GM12878 (cell line): ENCODE measurements at regions of chrX and their contacts with region 1.

Region 1: GRCh38 chrX:13487731-13488523 is 81.5 kb upstream of the EGFL6 start:
- DNase-seq: peak; percentile 72
- ATAC-seq: peak; percentile 86
- H3K4me3 ChIP-seq: no peak overlapping the region
- H3K27ac ChIP-seq: peak overlapping the region; percentile 95
- H3K4me1 ChIP-seq: peaks cover 16% of the 10 kb centered on the region
- H3K27me3 ChIP-seq: no peaks in the 10 kb centered on the region
- CTCF ChIP-seq: peak; percentile 56 to 80 (median 62)
- EP300 ChIP-seq: no peak
- POLR2A ChIP-seq: no peak
- RAD21 ChIP-seq: peak; percentile 98

Region 2: GRCh38 chrX:12901486-12901885 is 586.4 kb before region 1 on chrX:
- CTCF ChIA-PET with region 1: interaction called, 18 read pairs
- POLR2A ChIA-PET with region 1: no interaction called
- RAD21 ChIA-PET with region 1: interaction called, 18 read pairs
- SMC1A ChIA-PET with region 1: interaction called, 9 read pairs
- in situ Hi-C with region 1: no loop called
- intact Hi-C with region 1: loop called (anchors 5 kb)
- DNase-seq: no peak
- ATAC-seq: peak; percentile 93
- H3K4me3 ChIP-seq: no peak overlapping the region
- H3K27ac ChIP-seq: no peak overlapping the region
- H3K4me1 ChIP-seq: no peaks in the 10 kb centered on the region
- H3K27me3 ChIP-seq: no peaks in the 10 kb centered on the region
- CTCF ChIP-seq: peak; percentile 68 to 84 (median 75)
- EP300 ChIP-seq: no peak
- POLR2A ChIP-seq: no peak
- RAD21 ChIP-seq: peak; percentile 80

Region 3: GRCh38 chrX:12984629-12985319 is 503.2 kb before region 1 on chrX:
- CTCF ChIA-PET with region 1: interaction called, 4 read pairs
- POLR2A ChIA-PET with region 1: no interaction called
- RAD21 ChIA-PET with region 1: interaction called, 18 read pairs
- SMC1A ChIA-PET with region 1: interaction called, 10 read pairs
- in situ Hi-C with region 1: no loop called
- intact Hi-C with region 1: loop called (anchors 2 kb)
- DNase-seq: no peak
- ATAC-seq: peak; percentile 74
- H3K4me3 ChIP-seq: peak overlapping the region; percentile 26; the same call in 1 of the 2 replicates
- H3K27ac ChIP-seq: peak overlapping the region; percentile 98
- H3K4me1 ChIP-seq: peaks cover 68% of the 10 kb centered on the region
- H3K27me3 ChIP-seq: no peaks in the 10 kb centered on the region
- CTCF ChIP-seq: no peak
- EP300 ChIP-seq: peak; percentile 68 to 87; a peak in 3 of 4 replicates
- POLR2A ChIP-seq: no peak
- RAD21 ChIP-seq: no peak; the same call in 1 of the 2 replicates

Region 4: GRCh38 chrX:13094828-13095341 is 393.0 kb before region 1 on chrX:
- CTCF ChIA-PET with region 1: interaction called, 101 read pairs
- POLR2A ChIA-PET with region 1: interaction called, 7 read pairs
- RAD21 ChIA-PET with region 1: interaction called, 145 read pairs
- SMC1A ChIA-PET with region 1: interaction called, 127 read pairs
- in situ Hi-C with region 1: no loop called
- intact Hi-C with region 1: loop called (anchors 1 kb)
- DNase-seq: no peak
- ATAC-seq: no peak
- H3K4me3 ChIP-seq: no peak overlapping the region
- H3K27ac ChIP-seq: no peak overlapping the region
- H3K4me1 ChIP-seq: peaks cover 44% of the 10 kb centered on the region
- H3K27me3 ChIP-seq: no peaks in the 10 kb centered on the region
- CTCF ChIP-seq: no peak
- EP300 ChIP-seq: no peak
- POLR2A ChIP-seq: no peak
- RAD21 ChIP-seq: no peak

Region 5: GRCh38 chrX:13263560-13264251 is 224.2 kb before region 1 on chrX:
- CTCF ChIA-PET with region 1: interaction called, 13 read pairs
- POLR2A ChIA-PET with region 1: interaction called, 6 read pairs
- RAD21 ChIA-PET with region 1: interaction called, 22 read pairs
- SMC1A ChIA-PET with region 1: interaction called, 15 read pairs
- in situ Hi-C with region 1: loop called (anchors 10 kb)
- intact Hi-C with region 1: loop called (anchors 1 kb)
- DNase-seq: peak; percentile 66
- ATAC-seq: peak; percentile 92
- H3K4me3 ChIP-seq: no peak overlapping the region; the same call in 1 of the 2 replicates
- H3K27ac ChIP-seq: peak overlapping the region; percentile 66
- H3K4me1 ChIP-seq: peaks cover 20% of the 10 kb centered on the region
- H3K27me3 ChIP-seq: no peaks in the 10 kb centered on the region
- CTCF ChIP-seq: no peak
- EP300 ChIP-seq: no peak; a peak in 1 of 4 replicates
- POLR2A ChIP-seq: no peak
- RAD21 ChIP-seq: no peak

Region 6: DNA sequence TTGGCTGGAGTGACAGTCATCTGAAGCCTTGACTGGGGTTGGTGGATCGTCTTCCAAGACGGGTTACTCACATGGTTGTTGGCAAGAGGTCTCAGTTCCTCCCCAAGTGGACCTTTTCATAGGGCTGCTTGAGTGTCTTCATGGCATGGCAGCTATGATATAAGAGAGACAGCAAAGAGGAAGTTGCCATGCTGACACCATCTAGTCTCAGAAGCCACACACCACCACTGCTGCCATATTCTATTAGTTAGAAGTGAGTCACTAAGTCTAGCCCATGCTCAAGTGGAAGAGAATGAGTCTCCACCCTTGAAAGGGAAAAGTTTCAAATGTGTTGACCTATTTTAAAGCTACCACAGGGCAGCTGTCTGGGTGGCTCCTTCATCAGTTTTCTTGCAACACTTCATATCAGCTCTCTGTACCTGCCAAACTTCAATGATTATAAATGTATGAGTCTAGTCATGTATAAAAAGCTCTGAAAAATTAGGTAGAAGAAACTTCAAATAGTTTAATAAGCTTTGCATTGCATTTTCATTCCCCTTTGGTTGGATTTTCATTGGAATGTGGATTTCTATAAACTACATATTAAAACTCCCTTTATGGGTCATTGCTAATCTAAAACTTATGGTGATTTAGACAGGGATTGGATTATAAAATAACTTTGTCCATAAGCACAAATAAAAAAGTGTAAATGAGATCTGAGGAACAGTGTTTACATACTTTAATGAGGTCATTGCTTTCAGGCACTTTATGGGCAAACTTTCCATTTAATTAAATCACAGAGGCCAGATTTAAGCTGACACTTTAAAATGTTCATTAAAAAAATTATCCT is 100.0 kb before region 1 on chrX:
- CTCF ChIA-PET with region 1: no interaction called
- POLR2A ChIA-PET with region 1: no interaction called
- RAD21 ChIA-PET with region 1: interaction called, 3 read pairs
- SMC1A ChIA-PET with region 1: interaction called, 3 read pairs
- in situ Hi-C with region 1: no loop called
- intact Hi-C with region 1: loop called (anchors 5 kb)
- DNase-seq: no peak
- ATAC-seq: peak; percentile 84
- H3K4me3 ChIP-seq: no peak overlapping the region
- H3K27ac ChIP-seq: no peak overlapping the region
- H3K4me1 ChIP-seq: no peaks in the 10 kb centered on the region
- H3K27me3 ChIP-seq: no peaks in the 10 kb centered on the region
- CTCF ChIP-seq: no peak
- EP300 ChIP-seq: no peak
- POLR2A ChIP-seq: no peak
- RAD21 ChIP-seq: no peak

Region 7: GRCh38 chrX:13742397-13743176 is 254.7 kb after region 1 on chrX:
- CTCF ChIA-PET with region 1: no interaction called
- POLR2A ChIA-PET with region 1: no interaction called
- RAD21 ChIA-PET with region 1: no interaction called
- SMC1A ChIA-PET with region 1: no interaction called
- in situ Hi-C with region 1: no loop called
- intact Hi-C with region 1: no loop called
- DNase-seq: peak; percentile 91
- ATAC-seq: peak; percentile 92
- H3K4me3 ChIP-seq: peak overlapping the region; percentile 19; the same call in 1 of the 2 replicates
- H3K27ac ChIP-seq: peak overlapping the region; percentile 62; the same call in 1 of the 2 replicates
- H3K4me1 ChIP-seq: peaks cover 23% of the 10 kb centered on the region
- H3K27me3 ChIP-seq: no peaks in the 10 kb centered on the region
- CTCF ChIP-seq: no peak
- EP300 ChIP-seq: peak; percentile 65 to 74
- POLR2A ChIP-seq: no peak
- RAD21 ChIP-seq: no peak